ENCODE measurements at regions of chr5 and their contacts with region 1.

Region 1: GRCh38 chr5:160230686-160231527 is 1.6 kb downstream of the FABP6 start:
- DNase-seq: peak; percentile 21 to 56
- H3K4me3 ChIP-seq: no peak overlapping the region
- H3K27ac ChIP-seq: no peak overlapping the region
- H3K4me1 ChIP-seq: 0 out of 2 replicates have a peak, but pooled peaks cover 8% of the 10 kb centered on the region
- H3K27me3 ChIP-seq: no peaks in the 10 kb centered on the region
- CTCF ChIP-seq: no peak

Region 2: GRCh38 chr5:159504857-159505304 is 726.0 kb before region 1 on chr5:
- CTCF ChIA-PET with region 1: no interaction called
- POLR2A ChIA-PET with region 1: no interaction called
- intact Hi-C with region 1: no loop called
- DNase-seq: peak; percentile 89 to 93
- H3K4me3 ChIP-seq: peak overlapping the region; percentile 18; the same call in 1 of the 2 replicates
- H3K27ac ChIP-seq: peak overlapping the region; percentile 82
- H3K4me1 ChIP-seq: peaks cover 38% of the 10 kb centered on the region
- H3K27me3 ChIP-seq: no peaks in the 10 kb centered on the region
- CTCF ChIP-seq: no peak

Region 3: DNA sequence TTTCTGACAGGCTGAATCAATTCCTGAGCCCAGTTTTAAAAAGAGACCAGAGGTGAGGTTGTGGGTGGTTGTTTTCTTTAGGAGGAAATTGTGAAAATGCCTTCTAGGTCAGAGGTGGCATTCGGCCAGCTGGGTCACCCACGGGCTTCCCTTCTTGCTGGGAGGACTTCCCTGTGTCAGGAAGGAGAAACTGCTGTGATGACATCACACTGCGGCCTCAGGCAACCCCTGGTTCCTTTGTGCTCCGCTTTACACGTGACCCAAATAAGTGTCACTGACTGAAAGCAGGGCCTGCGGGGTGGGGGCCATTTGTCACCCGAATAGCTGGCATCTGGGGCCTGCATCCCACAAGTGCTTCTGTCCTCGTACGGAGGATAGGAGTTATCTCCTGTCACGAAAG is 38.1 kb after region 1 on chr5:
- CTCF ChIA-PET with region 1: no interaction called
- POLR2A ChIA-PET with region 1: interaction called, 33 read pairs
- intact Hi-C with region 1: no loop called
- DNase-seq: peak; percentile 52 to 64
- H3K4me3 ChIP-seq: no peak overlapping the region
- H3K27ac ChIP-seq: no peak overlapping the region
- H3K4me1 ChIP-seq: peaks cover 11% of the 10 kb centered on the region
- H3K27me3 ChIP-seq: no peaks in the 10 kb centered on the region
- CTCF ChIP-seq: no peak